Motor neuron (in vitro differentiated cells): ENCODE measurements at regions of chr18 and their contacts with region 1.

Region 1: GRCh38 chr18:2395427-2396161 is 175.7 kb downstream of the METTL4 start:
- ATAC-seq: no peak
- H3K4me3 ChIP-seq: no peak overlapping the region
- H3K27ac ChIP-seq: no peak overlapping the region
- H3K4me1 ChIP-seq: no peaks in the 10 kb centered on the region

Region 2: GRCh38 chr18:2111456-2111855 is 284.1 kb before region 1 on chr18:
- in situ Hi-C with region 1: no loop called
- ATAC-seq: peak in 1 of 8 experiments; percentile 22
- H3K4me3 ChIP-seq: no peak overlapping the region
- H3K27ac ChIP-seq: no peak overlapping the region
- H3K4me1 ChIP-seq: no peaks in the 10 kb centered on the region

Region 3: DNA sequence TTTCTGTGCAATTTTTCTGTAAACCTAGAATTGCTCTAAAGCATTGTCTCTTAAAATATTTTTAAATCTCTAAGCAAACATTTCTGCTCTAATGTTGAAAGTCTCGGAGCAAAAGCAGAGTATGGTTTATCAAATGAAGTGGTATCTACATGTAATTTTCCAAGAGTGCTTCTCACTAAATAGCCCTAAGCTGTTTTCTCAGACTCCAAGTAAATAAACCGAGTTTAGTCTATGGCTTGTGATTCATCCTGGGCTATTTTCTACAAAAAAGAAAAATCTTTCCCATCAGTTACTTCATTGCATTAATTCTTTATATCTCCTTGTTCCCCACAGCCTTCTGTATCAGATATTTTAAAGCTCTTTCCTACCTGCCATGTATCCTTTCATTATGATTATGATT is 85.0 kb after region 1 on chr18:
- in situ Hi-C with region 1: loop called in 2 of 9 experiments (anchors 25 kb)
- ATAC-seq: no peak
- H3K4me3 ChIP-seq: no peak overlapping the region
- H3K27ac ChIP-seq: no peak overlapping the region
- H3K4me1 ChIP-seq: no peaks in the 10 kb centered on the region